ENCODE measurements at regions of chr15 and their contacts with region 1.

Region 1: DNA sequence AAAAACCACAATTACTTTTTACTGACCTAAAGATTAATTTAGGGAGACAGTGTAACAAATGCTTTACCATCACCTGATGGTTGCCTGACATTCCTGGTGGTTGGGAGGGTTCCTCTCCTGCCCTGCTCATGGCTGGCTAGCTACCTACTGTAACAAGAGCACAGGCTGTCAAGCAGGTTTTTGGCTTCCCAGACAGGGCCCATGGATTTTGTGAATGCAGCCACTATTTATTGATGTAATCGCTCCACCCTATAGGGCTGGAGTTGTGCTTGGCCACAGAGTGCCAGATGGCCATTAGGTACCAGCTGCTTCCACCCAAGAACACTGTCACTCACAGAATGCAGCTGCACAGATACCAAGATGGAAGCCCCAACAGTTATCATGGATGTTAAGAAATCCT is 31.0 kb upstream of the KLHL25 start:
- DNase-seq: no peak
- H3K4me3 ChIP-seq: no peak overlapping the region
- H3K4me3 Mint-ChIP-seq: no peak overlapping the region
- H3K27ac ChIP-seq: no peak overlapping the region
- H3K27ac Mint-ChIP-seq: peak overlapping the region in 1 of 7 donors; percentile 38
- H3K4me1 ChIP-seq: no peaks in the 10 kb centered on the region
- H3K4me1 Mint-ChIP-seq: no peaks in the 10 kb centered on the region
- H3K27me3 ChIP-seq: no peaks in the 10 kb centered on the region
- H3K27me3 Mint-ChIP-seq: peaks cover 0 to 3% of the 10 kb centered on the region in 2 donors

Region 2: DNA sequence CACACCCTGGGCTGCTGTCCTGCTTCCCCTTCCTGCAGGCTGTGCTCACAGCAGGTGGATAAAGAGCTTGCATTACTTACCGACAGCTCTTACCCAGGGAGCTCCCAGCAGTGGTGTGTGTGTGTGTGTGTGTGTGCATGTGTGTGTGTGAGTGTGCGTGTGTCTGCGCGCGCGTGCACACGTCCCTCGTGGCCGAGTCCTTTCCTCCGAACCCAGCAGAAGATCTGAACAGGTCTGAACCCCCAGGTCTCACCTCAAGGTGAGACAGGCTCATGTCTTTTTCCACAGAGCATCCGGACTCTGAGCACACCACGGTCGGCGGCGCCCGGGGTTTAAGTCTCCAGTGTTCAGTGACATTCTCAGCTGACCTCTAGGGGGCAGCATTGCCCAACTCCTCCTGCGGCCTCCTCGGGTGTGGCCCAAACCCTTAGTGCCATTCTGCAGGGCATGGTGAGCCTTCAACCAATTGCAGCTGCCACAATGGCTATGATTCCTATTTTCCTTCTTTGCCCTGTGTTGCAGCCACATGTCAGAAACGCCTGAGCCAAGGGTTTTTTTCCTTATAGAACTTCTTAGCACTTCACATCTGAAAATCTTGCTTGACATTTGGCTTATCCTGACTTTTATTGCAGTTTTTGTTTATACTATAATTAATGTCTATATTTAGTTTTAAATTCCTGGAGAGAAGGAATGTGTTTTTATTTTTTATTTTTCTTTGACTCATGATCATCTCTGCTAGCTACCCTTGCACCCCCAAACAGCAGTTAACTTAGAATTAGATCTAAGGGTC is 33.1 kb after region 1 on chr15:
- CTCF ChIA-PET with region 1: interaction called, 13 read pairs
- POLR2A ChIA-PET with region 1: no interaction called
- intact Hi-C with region 1: no loop called
- DNase-seq: peak; percentile 66 to 71 (median 69)
- H3K4me3 ChIP-seq: peak overlapping the region in 1 of 2 donors; percentile 19
- H3K4me3 Mint-ChIP-seq: peak overlapping the region in 7 of 8 donors; percentile 1 to 80 (median 60)
- H3K27ac ChIP-seq: no peak overlapping the region
- H3K27ac Mint-ChIP-seq: peak overlapping the region in 5 of 7 donors; percentile 15 to 82 (median 47)
- H3K4me1 ChIP-seq: no peaks in the 10 kb centered on the region
- H3K4me1 Mint-ChIP-seq: peaks cover 5 to 11% (median 8%) of the 10 kb centered on the region in 4 donors
- H3K27me3 ChIP-seq: peaks cover 5% of the 10 kb centered on the region
- H3K27me3 Mint-ChIP-seq: peaks cover 16 to 18% of the 10 kb centered on the region in 2 donors

Region 3: DNA sequence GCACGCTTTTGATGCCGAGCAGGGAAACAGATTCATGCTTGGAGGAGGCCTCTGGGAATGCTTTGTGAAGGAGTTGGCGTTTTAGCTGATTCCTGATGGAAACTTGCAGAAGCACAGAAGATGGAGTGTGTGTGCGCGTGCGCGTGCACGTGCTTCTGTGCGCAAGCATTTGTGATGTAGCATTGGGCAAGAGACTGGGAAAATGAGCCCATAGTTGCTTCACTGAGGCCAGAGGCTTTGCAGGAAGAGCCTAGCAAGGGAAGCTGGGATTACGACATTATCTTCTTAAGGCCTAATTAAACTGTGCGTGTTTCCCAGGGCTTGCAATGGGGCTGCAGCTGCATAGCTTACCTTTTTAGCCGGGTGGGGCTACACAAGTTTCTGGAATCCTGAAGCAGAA is 235.9 kb after region 1 on chr15:
- CTCF ChIA-PET with region 1: no interaction called
- POLR2A ChIA-PET with region 1: no interaction called
- intact Hi-C with region 1: no loop called
- DNase-seq: no peak
- H3K4me3 ChIP-seq: no peak overlapping the region
- H3K4me3 Mint-ChIP-seq: no peak overlapping the region
- H3K27ac ChIP-seq: no peak overlapping the region
- H3K27ac Mint-ChIP-seq: no peak overlapping the region
- H3K4me1 ChIP-seq: no peaks in the 10 kb centered on the region
- H3K4me1 Mint-ChIP-seq: peaks cover 0 to 2% (median 0%) of the 10 kb centered on the region in 4 donors
- H3K27me3 ChIP-seq: no peaks in the 10 kb centered on the region
- H3K27me3 Mint-ChIP-seq: peaks cover 9 to 12% of the 10 kb centered on the region in 2 donors

Measured in CD4-positive, alpha-beta memory T cell (primary cell).